Calu3 (cell line): ENCODE measurements at regions of chr1 and their contacts with region 1.

Region 1: GRCh38 chr1:150363426-150364230 is at the start of gene RPRD2:
- DNase-seq: peak; percentile 99
- H3K4me3 Mint-ChIP-seq: peak within 1 kb of the TSS; percentile 94
- H3K27ac Mint-ChIP-seq: peak within 1 kb of the TSS; percentile 99
- H3K4me1 Mint-ChIP-seq: peaks cover 18% of the 10 kb centered on the region
- H3K27me3 Mint-ChIP-seq: no peaks in the 10 kb centered on the region
- CTCF ChIP-seq: no peak
- total RNA-seq, gene RPRD2: 36.6 and 37.8 TPM in 2 replicates

Region 2: GRCh38 chr1:150302338-150302737 is 61.3 kb before region 1 on chr1:
- CTCF ChIA-PET with region 1: no interaction called
- intact Hi-C with region 1: no loop called
- DNase-seq: no peak
- H3K4me3 Mint-ChIP-seq: no peak overlapping the region
- H3K27ac Mint-ChIP-seq: no peak overlapping the region
- H3K4me1 Mint-ChIP-seq: no peaks in the 10 kb centered on the region
- H3K27me3 Mint-ChIP-seq: no peaks in the 10 kb centered on the region
- CTCF ChIP-seq: no peak

Region 3: DNA sequence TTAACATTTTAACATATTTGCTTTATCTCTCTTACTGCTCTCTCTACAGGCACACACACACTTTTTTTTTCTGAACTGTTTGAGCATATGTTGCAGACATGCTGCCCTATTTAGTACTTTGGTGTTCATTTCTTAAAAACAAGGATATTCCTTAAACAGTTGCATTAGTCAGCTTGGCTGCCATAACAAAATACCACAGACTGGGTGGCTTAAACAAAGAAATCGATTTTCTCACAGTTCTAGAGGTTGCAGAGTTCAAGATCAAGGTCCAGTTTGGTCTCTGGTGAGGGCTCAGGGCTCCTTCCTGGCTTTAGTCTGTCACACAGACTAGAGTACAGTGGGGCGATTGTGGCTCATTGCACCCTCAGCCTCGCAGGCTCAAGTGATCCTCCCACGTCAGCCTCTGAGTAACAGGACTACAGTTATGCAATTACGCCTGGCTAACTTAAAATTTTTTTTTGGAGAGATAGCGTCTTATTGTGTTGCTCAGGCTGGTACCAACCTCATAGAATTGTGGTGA is 47.0 kb after region 1 on chr1:
- CTCF ChIA-PET with region 1: no interaction called
- intact Hi-C with region 1: loop called (anchors 2 kb)
- DNase-seq: peak; percentile 92
- H3K4me3 Mint-ChIP-seq: peak overlapping the region; percentile 56
- H3K27ac Mint-ChIP-seq: peak overlapping the region; percentile 90
- H3K4me1 Mint-ChIP-seq: peaks cover 78% of the 10 kb centered on the region
- H3K27me3 Mint-ChIP-seq: no peaks in the 10 kb centered on the region
- CTCF ChIP-seq: no peak

Region 4: DNA sequence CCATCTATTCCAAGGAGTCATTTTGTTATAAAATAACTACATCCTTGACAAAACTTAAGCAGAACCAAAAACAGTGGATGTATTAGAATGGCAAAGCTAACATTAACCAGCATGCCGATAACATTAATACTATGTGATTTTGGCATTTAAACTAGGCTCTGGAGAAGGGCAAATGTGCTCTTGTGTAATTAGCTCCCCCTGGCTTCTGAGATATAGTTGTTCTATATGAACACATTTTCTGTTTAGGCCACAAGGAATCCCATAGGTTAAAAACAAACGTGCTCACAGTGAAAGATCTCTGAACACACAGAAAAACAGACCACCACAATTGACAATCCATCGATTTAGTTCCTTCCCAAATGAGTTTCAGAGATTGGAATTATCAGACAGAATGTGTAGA is 66.2 kb after region 1 on chr1:
- CTCF ChIA-PET with region 1: interaction called, 3 read pairs
- intact Hi-C with region 1: loop called (anchors 2 kb)
- DNase-seq: no peak
- H3K4me3 Mint-ChIP-seq: no peak overlapping the region
- H3K27ac Mint-ChIP-seq: peak overlapping the region; percentile 32
- H3K4me1 Mint-ChIP-seq: peaks cover 17% of the 10 kb centered on the region
- H3K27me3 Mint-ChIP-seq: no peaks in the 10 kb centered on the region
- CTCF ChIP-seq: peak; percentile 38